AG04449 (cell line): ENCODE measurements at regions of chrX and their contacts with region 1.

Region 1: DNA sequence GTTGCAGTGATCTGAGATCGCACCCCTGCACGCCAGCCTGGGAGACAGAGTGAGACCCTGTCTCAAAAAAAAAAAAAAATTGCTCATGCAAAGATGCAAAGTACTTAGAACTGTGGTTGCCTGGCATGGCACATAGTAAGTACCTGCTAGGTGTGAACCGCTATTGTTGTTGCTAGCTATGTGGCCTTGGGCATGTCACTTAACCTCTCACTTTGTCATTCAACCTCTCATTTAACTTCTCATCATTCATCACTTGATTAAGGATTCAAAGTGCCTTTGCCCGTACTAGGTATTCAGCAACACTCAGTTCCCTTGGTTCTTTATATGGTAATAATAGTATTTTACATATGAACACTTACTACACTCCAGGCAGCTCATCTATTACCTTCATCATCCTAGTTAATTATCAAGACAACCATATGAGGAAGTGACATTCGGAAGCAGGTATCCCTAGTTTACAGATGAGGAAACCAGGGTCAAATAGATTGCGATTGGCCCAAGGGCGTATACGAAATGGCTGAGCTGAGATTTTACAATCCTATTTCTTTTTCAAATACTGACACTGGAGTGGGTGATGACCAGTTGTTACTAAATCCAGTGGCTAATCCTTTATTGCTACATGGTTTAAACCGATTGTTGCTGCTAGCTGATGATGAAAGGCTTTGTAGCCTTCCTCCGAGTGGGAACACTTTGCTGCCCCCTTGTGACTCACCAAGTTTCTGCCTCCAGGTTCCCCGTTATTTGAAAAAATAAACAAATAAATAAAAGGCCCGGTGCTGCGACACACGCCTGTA is 28.8 kb upstream of the SOWAHD start:
- DNase-seq: peak; percentile 23
- H3K4me3 ChIP-seq: no peak overlapping the region
- CTCF ChIP-seq: peak; percentile 42

Region 2: GRCh38 chrX:119516157-119516702 is 213.4 kb before region 1 on chrX:
- CTCF ChIA-PET with region 1: interaction called, 29 read pairs
- POLR2A ChIA-PET with region 1: no interaction called
- DNase-seq: no peak
- H3K4me3 ChIP-seq: no peak overlapping the region
- CTCF ChIP-seq: peak; percentile 73

Region 3: DNA sequence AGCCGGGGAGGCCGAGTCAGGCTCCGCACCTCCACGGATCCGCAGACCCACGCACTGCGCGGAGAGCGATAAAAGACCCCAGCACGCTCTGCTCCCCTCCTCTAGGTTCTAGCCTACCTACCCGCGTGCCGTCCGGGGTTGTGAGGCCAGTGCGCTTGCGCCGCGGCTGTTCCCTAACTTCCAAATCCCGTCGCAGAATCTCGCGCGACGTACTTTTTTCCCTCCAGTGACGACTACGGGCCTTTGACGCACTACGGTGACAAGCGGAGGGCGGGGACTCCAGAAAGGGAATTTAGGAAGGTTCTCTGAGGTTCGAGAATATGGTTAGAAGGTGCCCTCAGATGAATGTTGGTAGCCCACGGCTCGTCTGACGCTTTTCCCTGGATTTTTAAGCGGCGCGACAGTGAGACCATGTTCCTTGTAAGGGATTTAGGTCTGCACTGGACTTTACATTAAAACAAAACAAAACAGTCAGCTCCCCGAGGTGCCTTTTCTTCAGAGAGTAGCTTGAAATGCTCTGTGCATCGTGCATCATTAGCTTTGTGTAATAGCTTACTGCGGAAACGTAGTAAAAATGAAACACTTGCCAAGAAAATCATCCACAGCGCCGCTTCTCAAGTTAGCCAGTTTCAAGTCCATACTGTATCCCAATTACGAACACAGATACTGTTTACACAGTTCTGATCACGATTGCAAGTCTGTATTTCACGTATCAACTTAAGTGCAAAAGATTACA is 123.2 kb before region 1 on chrX and contains the start of gene NKRF:
- CTCF ChIA-PET with region 1: interaction called, 26 read pairs
- POLR2A ChIA-PET with region 1: no interaction called
- DNase-seq: peak; percentile 41
- H3K4me3 ChIP-seq: peak within 1 kb of the TSS; percentile 89
- CTCF ChIP-seq: no peak

Region 4: GRCh38 chrX:119685225-119686066 is 44.2 kb before region 1 on chrX:
- CTCF ChIA-PET with region 1: interaction called, 10 read pairs
- POLR2A ChIA-PET with region 1: no interaction called
- DNase-seq: no peak
- H3K4me3 ChIP-seq: no peak overlapping the region
- CTCF ChIP-seq: no peak

Region 5: DNA sequence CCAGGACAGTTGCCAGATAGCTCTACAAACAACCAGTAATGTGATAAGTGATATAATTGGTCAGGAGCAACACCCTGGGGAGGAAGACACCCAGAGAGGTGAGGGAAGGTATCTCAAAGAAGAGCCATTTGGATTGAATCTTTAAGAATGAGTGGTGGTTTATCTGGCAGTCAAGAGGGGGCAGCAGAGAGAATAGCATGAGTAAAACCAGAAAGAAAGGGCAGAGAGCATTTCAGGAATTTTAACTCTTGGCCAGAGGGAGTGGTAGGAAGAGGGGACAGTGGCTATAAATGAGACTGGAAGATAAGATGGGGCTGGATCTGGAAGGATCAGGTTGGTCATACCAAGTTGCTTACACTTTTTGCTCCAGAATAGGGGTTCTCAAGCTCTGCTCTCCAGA is 30.8 kb before region 1 on chrX:
- CTCF ChIA-PET with region 1: interaction called, 20 read pairs
- POLR2A ChIA-PET with region 1: no interaction called
- DNase-seq: no peak
- H3K4me3 ChIP-seq: no peak overlapping the region
- CTCF ChIP-seq: peak; percentile 42

Region 6: GRCh38 chrX:119706616-119707015 is 23.0 kb before region 1 on chrX:
- CTCF ChIA-PET with region 1: interaction called, 12 read pairs
- POLR2A ChIA-PET with region 1: no interaction called
- DNase-seq: no peak
- H3K4me3 ChIP-seq: no peak overlapping the region
- CTCF ChIP-seq: no peak

Region 7: DNA sequence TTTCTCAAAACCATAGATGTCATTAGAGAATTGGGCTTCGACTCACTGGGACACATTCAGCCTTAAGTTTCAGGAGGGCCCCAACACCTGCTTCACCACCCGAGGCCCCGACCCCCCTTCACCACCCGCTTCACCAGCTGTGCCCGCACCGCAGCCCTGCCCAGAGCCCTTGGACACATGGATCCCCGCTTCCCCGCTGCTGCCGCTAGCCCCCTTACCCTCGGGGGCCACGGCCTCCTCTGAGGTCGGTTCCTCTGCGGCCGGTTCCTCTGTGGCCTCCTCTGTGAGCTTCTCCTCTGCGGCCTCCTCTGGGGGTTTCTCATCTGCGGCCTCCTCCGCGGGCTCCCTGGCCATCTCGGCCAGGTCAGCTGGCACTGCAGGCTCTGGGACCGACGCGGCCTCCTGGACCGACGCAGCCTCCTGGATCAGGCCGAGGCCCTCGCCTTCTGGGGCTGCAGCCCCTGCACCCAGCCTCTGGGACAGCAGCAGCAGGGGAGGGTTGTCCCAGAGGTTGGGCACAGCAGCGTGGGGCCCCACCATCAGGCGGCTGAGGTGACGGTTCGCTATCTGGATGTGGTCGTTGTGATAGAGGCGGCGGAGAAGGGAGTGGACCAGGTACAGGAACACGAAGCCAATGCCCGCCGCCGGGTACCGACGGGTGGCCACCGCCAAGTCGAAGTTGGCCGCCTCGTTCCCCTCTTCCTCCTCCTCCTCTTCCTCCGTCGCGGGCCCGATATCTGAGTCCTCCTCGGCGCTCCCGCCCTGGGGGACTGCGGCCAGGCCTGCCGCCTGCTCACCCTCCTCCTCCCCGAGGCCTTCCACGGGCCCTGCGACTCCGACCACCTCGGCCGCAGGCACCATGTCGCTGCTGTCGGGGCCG is 1145.3 kb after region 1 on chrX:
- CTCF ChIA-PET with region 1: no interaction called
- POLR2A ChIA-PET with region 1: no interaction called
- DNase-seq: no peak
- H3K4me3 ChIP-seq: no peak overlapping the region
- CTCF ChIP-seq: no peak